Panc1 (cell line): ENCODE measurements at regions of chr16 and their contacts with region 1.

Region 1: GRCh38 chr16:23274969-23275368 is 27.1 kb upstream of the SCNN1B start:
- DNase-seq: no peak
- ATAC-seq: peak; percentile 43; the same call in 1 of the 2 replicates
- H3K4me3 ChIP-seq: no peak overlapping the region
- H3K27ac ChIP-seq: no peak overlapping the region
- H3K4me1 ChIP-seq: peaks cover 15% of the 10 kb centered on the region
- H3K27me3 ChIP-seq: no peaks in the 10 kb centered on the region
- CTCF ChIP-seq: no peak

Region 2: GRCh38 chr16:23182460-23183309 is 92.3 kb before region 1 on chr16 and contains the start of gene SCNN1G:
- CTCF ChIA-PET with region 1: interaction called, 15 read pairs
- POLR2A ChIA-PET with region 1: no interaction called
- in situ Hi-C with region 1: no loop called
- intact Hi-C with region 1: loop called (anchors 10 kb)
- DNase-seq: peak; percentile 33
- ATAC-seq: peak; percentile 99
- H3K4me3 ChIP-seq: peak within 1 kb of the TSS; percentile 42 to 49
- H3K27ac ChIP-seq: peak within 1 kb of the TSS; percentile 11; the same call in 1 of the 2 replicates
- H3K4me1 ChIP-seq: peaks cover 8% of the 10 kb centered on the region
- H3K27me3 ChIP-seq: peaks cover 12% of the 10 kb centered on the region; the same call in 1 of the 2 replicates
- CTCF ChIP-seq: peak; percentile 100
- total RNA-seq, gene SCNN1G: 3.4 TPM

Region 3: DNA sequence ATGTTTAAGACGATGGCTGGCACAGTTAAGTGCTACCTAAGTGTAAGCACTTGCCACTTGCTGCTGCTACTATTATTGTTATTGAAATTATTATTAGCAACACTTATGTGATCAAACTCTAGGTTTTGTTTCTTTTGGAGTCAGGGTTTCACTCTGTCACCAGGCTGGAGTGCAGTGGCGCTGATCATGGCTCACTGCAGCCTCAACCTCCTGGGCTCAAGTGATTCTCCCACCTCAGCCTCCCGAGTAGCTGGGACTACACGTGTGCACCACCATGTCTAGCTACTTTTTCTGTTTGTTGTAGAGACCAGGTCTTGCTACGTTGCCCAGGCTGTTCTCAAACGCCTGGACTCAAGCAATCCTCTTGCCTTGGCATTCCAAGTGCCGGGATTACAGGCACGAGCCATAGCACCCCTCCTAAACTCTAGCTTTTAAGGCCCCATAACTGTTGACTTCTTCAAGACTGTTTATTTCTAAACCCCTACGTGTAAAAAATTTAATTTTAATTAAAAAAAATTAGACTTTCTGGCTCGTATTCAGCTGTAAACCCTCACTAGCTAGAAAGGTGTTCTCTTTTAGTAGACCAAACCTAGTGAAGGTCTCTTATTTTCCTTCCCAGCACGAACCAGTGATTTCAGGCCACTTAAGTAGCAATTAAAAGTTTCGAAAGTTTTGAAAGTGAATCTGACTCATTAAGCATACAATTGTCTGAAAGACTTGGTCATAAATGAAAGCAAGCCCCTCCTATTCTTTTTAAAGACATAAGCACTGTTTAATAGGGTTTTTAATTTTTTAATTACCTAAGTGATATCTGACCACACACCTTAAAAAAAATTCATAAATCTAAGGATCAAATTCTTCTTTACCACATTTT is 15.5 kb after region 1 on chr16:
- CTCF ChIA-PET with region 1: no interaction called
- POLR2A ChIA-PET with region 1: interaction called, 15 read pairs
- in situ Hi-C with region 1: no loop called
- intact Hi-C with region 1: no loop called
- DNase-seq: no peak
- ATAC-seq: no peak
- H3K4me3 ChIP-seq: no peak overlapping the region
- H3K27ac ChIP-seq: no peak overlapping the region
- H3K4me1 ChIP-seq: peaks cover 7% of the 10 kb centered on the region; the same call in 1 of the 2 replicates
- H3K27me3 ChIP-seq: no peaks in the 10 kb centered on the region
- CTCF ChIP-seq: no peak

Region 4: DNA sequence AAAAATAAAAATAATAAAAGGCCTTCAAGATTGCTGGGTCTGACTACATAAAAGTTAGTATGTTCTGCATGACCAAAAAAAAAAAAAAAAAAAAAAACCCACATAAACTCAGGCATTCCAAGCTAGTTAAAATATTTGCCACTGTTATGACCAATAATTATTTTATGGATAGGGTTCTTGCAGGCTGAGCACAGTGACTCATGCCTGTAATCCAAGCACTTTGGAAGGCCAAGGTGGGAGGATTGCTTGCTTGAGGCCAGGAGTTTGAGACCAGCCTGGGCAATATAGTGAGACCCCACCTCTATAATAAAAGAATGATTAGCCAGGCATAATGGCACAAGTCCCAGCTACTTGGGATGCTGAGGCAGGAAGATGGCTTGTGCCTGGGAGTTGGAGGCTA is 35.2 kb after region 1 on chr16:
- CTCF ChIA-PET with region 1: no interaction called
- POLR2A ChIA-PET with region 1: no interaction called
- in situ Hi-C with region 1: no loop called
- intact Hi-C with region 1: no loop called
- DNase-seq: no peak
- ATAC-seq: no peak; the same call in 1 of the 2 replicates
- H3K4me3 ChIP-seq: no peak overlapping the region
- H3K27ac ChIP-seq: peak overlapping the region; percentile 52; the same call in 1 of the 2 replicates
- H3K4me1 ChIP-seq: peaks cover 33% of the 10 kb centered on the region
- H3K27me3 ChIP-seq: no peaks in the 10 kb centered on the region
- CTCF ChIP-seq: no peak

Region 5: GRCh38 chr16:23694644-23695373 is 419.8 kb after region 1 on chr16:
- CTCF ChIA-PET with region 1: no interaction called
- POLR2A ChIA-PET with region 1: no interaction called
- in situ Hi-C with region 1: no loop called
- intact Hi-C with region 1: no loop called
- DNase-seq: no peak
- ATAC-seq: 0 out of 2 replicates have a peak, but pooled peaks have one; percentile 15
- H3K4me3 ChIP-seq: no peak overlapping the region
- H3K27ac ChIP-seq: no peak overlapping the region
- H3K4me1 ChIP-seq: no peaks in the 10 kb centered on the region
- H3K27me3 ChIP-seq: no peaks in the 10 kb centered on the region
- CTCF ChIP-seq: no peak